ENCODE measurements at regions of chr12 and their contacts with region 1.

Region 1: GRCh38 chr12:82873951-82874350 is 187.2 kb downstream of the TMTC2 start:
- DNase-seq: no peak
- ATAC-seq: no peak

Region 2: DNA sequence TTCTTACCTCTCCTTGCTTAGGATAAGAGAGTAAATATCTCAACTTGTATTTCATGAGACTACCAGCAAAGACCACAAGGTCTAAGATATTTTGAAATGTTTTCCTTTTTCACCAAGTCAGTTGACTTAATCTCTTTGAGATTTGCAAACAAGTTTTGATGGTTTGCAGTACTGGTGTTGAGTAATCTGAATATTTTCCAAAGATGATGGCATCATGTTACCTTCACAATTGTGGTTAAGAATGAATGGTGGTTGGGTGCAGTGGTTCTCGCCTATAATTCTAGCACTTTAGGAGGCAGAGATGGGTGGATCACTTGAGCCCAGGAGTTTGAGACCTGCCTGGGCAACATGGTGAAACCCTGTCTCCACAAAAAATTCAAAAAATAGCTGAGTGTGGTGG is 38.5 kb after region 1 on chr12:
- intact Hi-C with region 1: loop called (anchors 2 kb)
- DNase-seq: no peak
- ATAC-seq: peak; percentile 13

Measured in left ventricle myocardium superior (tissue), 1 donor.